PC-3 (cell line): ENCODE measurements at regions of chr6 and their contacts with region 1.

Region 1: GRCh38 chr6:126804332-126805064 is 314.0 kb upstream of the RSPO3 start:
- DNase-seq: peak; percentile 63
- ATAC-seq: peak; percentile 58
- H3K4me3 ChIP-seq: no peak overlapping the region
- H3K27ac ChIP-seq: no peak overlapping the region
- H3K4me1 ChIP-seq: no peaks in the 10 kb centered on the region
- H3K27me3 ChIP-seq: no peaks in the 10 kb centered on the region
- CTCF ChIP-seq: peak; percentile 68

Region 2: DNA sequence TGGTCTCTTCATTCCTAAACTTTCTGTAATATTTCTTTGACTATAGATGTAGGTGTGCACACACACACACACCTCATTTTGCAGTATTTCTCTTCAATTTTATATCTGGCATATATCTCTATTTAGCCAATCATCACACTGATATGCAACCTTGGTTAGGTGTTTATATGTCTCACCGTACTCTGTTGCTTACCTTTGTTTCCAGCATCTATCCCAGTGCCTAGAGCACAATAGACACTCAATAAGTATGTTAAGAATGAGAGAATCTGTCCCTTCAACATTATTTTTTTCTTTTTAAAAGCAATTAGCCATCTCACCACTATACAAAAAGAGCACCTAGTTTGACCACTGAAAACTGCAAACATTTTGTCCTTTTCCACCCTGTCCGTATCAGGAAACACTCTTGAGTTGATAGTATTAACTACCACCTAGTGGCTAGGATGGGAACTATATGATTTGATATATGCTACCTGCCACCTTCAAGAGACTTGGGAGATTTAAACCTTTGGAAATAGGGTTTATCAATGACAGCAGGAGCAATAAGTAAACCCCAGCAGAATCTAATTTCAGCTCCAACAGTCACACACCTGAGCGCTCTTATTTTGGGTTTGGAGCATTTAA is 265.3 kb after region 1 on chr6:
- CTCF ChIA-PET with region 1: no interaction called
- POLR2A ChIA-PET with region 1: no interaction called
- intact Hi-C with region 1: loop called (anchors 1 kb)
- DNase-seq: peak; percentile 42
- ATAC-seq: peak; percentile 58; the same call in 1 of the 2 replicates
- H3K4me3 ChIP-seq: no peak overlapping the region
- H3K27ac ChIP-seq: no peak overlapping the region
- H3K4me1 ChIP-seq: no peaks in the 10 kb centered on the region
- H3K27me3 ChIP-seq: no peaks in the 10 kb centered on the region
- CTCF ChIP-seq: peak; percentile 61

Region 3: GRCh38 chr6:127100510-127101140 is 296.1 kb after region 1 on chr6:
- CTCF ChIA-PET with region 1: no interaction called
- POLR2A ChIA-PET with region 1: no interaction called
- intact Hi-C with region 1: loop called (anchors 1 kb)
- DNase-seq: peak; percentile 16
- ATAC-seq: no peak; the same call in 1 of the 2 replicates
- H3K4me3 ChIP-seq: no peak overlapping the region
- H3K27ac ChIP-seq: no peak overlapping the region
- H3K4me1 ChIP-seq: no peaks in the 10 kb centered on the region
- H3K27me3 ChIP-seq: peaks cover 23% of the 10 kb centered on the region; the same call in 1 of the 2 replicates
- CTCF ChIP-seq: peak; percentile 47; the same call in 1 of the 2 replicates

Region 4: GRCh38 chr6:127120787-127121636 is 316.5 kb after region 1 on chr6:
- CTCF ChIA-PET with region 1: no interaction called
- POLR2A ChIA-PET with region 1: no interaction called
- intact Hi-C with region 1: loop called (anchors 1 kb)
- DNase-seq: peak; percentile 64
- ATAC-seq: peak; percentile 72
- H3K4me3 ChIP-seq: no peak overlapping the region
- H3K27ac ChIP-seq: no peak overlapping the region
- H3K4me1 ChIP-seq: no peaks in the 10 kb centered on the region; the same call in 1 of the 2 replicates
- H3K27me3 ChIP-seq: peaks cover 56% of the 10 kb centered on the region
- CTCF ChIP-seq: peak; percentile 83

Region 5: GRCh38 chr6:127190552-127190951 is 386.1 kb after region 1 on chr6:
- CTCF ChIA-PET with region 1: interaction called, 4 read pairs
- POLR2A ChIA-PET with region 1: no interaction called
- intact Hi-C with region 1: loop called (anchors 10 kb)
- DNase-seq: peak; percentile 41
- ATAC-seq: peak; percentile 53; the same call in 1 of the 2 replicates
- H3K4me3 ChIP-seq: no peak overlapping the region
- H3K27ac ChIP-seq: no peak overlapping the region
- H3K4me1 ChIP-seq: no peaks in the 10 kb centered on the region
- H3K27me3 ChIP-seq: no peaks in the 10 kb centered on the region
- CTCF ChIP-seq: peak; percentile 60